Endothelial cell of umbilical vein (primary cell): ENCODE measurements at regions of chr20 and their contacts with region 1.

Region 1: GRCh38 chr20:49549811-49550551 is 18.0 kb downstream of the PTGIS start:
- DNase-seq: no peak
- H3K4me3 ChIP-seq: no peak overlapping the region
- H3K27ac ChIP-seq: no peak overlapping the region
- H3K4me1 ChIP-seq: peaks cover 12% of the 10 kb centered on the region
- H3K27me3 ChIP-seq: no peaks in the 10 kb centered on the region
- CTCF ChIP-seq: no peak
- POLR2A ChIP-seq: no peak

Region 2: DNA sequence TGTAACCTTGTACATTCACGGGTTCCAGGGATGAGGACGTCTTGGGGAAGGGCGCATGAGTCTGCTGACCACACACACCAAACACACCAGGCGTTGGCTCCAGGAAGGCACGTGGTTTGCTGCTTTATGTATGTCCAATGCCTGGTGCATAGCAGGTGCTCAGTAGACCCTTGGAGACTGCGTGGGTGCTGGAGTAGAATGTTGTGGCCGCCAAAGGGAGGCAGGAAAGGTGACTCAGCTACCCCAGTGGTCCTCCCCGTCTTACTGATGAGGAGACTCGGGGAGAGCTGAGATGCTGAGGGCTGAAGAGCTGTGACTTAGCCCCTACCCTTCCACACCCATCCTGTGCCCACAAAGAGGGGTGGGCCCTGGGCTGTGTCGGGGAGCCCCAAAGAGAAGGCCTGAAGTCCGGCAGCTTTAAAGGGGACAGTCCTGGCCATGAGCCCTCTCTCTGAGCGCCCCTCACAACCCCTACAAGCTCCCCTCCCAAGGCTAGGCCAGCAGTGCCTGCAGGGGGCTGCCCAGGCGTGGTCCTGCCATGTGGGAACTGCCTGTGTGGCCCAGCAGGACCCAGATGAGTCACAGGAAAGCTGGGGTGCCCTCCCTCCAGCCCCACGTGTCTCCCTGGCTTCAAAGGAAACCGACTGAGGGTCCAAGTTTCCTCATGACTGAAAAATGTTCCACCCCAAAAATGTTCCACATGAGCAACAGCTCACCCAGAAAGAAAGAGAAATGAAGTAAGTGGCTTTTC is 46.0 kb after region 1 on chr20:
- CTCF ChIA-PET with region 1: interaction called, 962 read pairs
- POLR2A ChIA-PET with region 1: no interaction called
- dilution Hi-C with region 1: no loop called
- intact Hi-C with region 1: loop called (anchors 2 kb)
- DNase-seq: peak; percentile 44
- H3K4me3 ChIP-seq: no peak overlapping the region
- H3K27ac ChIP-seq: no peak overlapping the region
- H3K4me1 ChIP-seq: peaks cover 19% of the 10 kb centered on the region
- H3K27me3 ChIP-seq: no peaks in the 10 kb centered on the region
- CTCF ChIP-seq: no peak
- POLR2A ChIP-seq: no peak